Mammary epithelial cell (primary cell): ENCODE measurements at regions of chr12 and their contacts with region 1.

Region 1: DNA sequence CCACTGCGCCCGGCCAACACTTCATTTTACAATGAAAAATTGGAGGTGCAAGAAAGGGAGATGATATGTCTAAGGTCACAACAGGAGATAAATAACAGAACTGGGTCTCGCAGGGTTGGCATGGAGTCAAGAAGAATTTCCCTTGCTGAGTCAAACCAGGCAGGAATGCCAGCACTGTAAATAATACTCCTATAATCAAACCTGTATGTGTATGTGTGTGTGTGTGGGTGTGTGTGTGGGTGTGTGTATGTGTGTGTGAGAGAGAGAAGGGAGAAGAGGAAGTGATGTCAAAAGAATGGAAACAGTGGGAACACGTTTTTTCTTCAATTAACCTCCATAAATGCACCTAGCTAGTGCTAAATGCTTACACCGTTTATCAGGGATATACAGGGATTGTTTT is 70.4 kb downstream of the TMEM116 start:
- DNase-seq: peak; percentile 74
- H3K4me3 ChIP-seq: no peak overlapping the region
- H3K27ac ChIP-seq: no peak overlapping the region
- H3K4me1 ChIP-seq: peaks cover 2% of the 10 kb centered on the region
- H3K27me3 ChIP-seq: no peaks in the 10 kb centered on the region
- CTCF ChIP-seq: no peak

Region 2: DNA sequence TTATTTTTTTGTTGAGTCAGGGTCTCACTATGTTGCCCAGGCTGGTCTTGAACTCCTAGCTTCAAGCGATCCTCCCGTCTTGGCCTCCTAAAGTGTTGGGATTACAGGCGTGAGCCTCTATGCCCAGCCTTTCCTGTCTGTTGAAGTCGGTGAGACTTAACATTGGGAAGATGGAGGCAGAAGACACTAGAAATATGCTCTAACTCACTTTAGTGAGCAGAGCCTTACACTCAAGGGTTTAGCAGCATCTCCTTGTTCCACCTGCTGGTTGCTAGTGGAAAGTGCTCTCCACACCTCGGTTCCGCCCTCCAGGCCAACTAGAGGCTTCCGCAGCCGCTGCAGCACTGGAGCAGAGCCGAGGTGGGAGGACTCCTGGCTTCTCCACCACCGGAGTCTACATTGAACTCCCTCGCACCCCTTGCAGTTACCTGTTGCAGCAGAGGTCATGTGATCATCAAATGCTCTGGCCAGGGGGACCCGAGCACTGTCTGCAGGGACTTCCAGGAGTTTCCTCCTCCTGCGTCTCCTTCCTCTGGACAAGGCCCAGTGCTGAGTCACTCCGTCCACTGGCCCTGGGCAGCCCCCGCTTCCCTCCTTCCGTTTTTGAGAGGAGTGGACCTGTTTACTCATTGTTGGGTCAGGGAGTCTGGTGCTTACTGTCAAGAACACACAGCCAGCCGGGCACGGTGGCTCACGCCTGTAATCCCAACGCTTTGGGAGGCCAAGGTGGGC is 1244.2 kb before region 1 on chr12:
- CTCF ChIA-PET with region 1: no interaction called
- dilution Hi-C with region 1: no loop called
- in situ Hi-C with region 1: no loop called
- intact Hi-C with region 1: no loop called
- DNase-seq: peak; percentile 76
- H3K4me3 ChIP-seq: no peak overlapping the region
- H3K27ac ChIP-seq: no peak overlapping the region
- H3K4me1 ChIP-seq: no peaks in the 10 kb centered on the region
- H3K27me3 ChIP-seq: no peaks in the 10 kb centered on the region
- CTCF ChIP-seq: peak; percentile 68 to 74

Region 3: DNA sequence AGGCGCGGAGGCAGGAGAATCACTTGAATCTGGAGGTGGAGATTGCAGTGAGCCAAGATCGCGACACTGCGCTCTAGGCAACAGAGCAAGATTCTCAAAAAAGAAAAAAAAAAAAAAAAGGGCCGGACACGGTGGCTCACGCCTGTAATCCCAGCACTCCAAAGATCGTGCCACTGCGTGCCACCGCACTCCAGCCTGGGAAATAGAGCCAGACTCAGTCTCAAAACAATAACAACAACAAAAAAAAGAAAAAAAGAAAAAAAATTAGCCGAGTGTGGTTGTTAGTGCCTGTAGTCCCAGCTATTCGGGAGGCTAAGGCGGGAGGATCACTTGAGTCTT is 467.3 kb after region 1 on chr12:
- CTCF ChIA-PET with region 1: no interaction called
- dilution Hi-C with region 1: no loop called
- in situ Hi-C with region 1: no loop called
- intact Hi-C with region 1: loop called (anchors 2 kb)
- DNase-seq: no peak
- H3K4me3 ChIP-seq: no peak overlapping the region
- H3K27ac ChIP-seq: no peak overlapping the region
- H3K4me1 ChIP-seq: peaks cover 19% of the 10 kb centered on the region
- H3K27me3 ChIP-seq: no peaks in the 10 kb centered on the region
- CTCF ChIP-seq: no peak